Activated CD8-positive, alpha-beta T cell treated with anti-CD3 and anti-CD28 coated beads for 36 hours (primary cell): ENCODE measurements at regions of chr11 and their contacts with region 1.

Region 1: DNA sequence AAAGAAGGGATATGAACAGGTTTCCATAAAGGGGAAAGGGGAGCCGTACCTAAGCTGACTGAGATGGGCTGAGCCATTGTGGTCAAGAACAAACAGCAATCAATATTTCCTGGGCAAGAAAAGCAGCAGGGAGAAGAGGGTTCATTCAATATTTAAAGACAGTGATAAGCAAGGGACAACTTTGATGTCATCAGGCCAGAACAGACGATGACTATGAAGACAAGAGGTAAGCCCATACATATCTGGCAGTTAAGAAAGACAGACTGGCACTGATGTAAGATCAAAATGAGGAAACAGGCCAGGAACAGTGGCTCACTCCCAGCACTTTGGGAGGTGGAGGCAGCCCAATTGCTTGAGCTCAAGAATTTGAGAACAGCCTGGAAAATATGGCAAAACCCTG is 2.4 kb downstream of the OR5A2 start:
- DNase-seq: no peak
- ATAC-seq: no peak
- H3K4me3 Mint-ChIP-seq: no peak overlapping the region
- H3K27ac Mint-ChIP-seq: no peak overlapping the region
- H3K4me1 Mint-ChIP-seq: no peaks in the 10 kb centered on the region
- H3K27me3 Mint-ChIP-seq: no peaks in the 10 kb centered on the region
- CTCF ChIP-seq: no peak

Region 2: DNA sequence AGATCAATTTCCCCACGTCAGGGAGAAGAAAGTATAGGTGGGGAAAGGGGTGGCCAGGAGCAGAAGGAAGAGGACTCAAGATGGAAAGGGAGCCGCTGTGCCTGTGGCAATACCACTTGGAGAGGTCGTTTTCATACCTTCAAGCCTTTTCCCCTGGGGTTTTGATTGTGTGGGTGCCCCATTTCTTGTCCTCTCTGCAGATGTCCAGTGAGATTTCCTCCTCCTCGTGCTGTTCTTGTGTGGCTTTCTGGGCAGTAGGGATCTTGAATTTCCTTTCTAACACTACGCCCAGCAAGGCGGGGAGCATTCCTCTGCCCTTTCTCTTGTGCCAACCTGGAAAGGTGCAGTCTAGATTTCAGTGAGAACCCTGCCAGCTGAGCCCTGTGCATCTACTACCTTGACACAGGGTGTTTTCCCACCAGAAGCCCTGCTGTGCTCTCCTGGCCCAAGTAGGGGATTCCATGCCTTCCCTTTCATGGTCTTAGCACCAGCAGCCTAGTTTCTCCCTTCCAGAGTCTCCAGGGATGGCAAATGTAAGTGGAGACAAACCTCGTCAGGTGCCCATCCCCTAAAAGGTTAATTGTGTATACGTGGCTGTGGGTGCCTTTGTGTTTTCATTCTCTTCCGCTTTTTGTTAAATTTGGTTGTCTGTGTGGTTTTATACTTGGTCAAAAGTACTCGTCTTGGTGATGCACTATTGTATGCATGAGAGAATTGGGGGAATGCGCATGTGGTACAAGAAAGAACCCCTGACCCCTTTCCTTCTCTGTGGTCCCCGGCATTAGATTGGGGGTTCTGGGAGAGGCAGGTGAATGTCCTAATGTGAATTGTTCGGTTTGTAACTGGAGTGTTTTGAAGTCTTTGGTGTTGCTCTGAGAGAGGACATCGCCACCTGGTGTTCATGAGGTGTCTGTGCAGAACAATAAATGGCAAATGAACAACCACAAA is 139.7 kb before region 1 on chr11:
- CTCF ChIA-PET with region 1: no interaction called
- POLR2A ChIA-PET with region 1: no interaction called
- intact Hi-C with region 1: loop called (anchors 5 kb)
- DNase-seq: peak; percentile 66
- ATAC-seq: peak; percentile 87
- H3K4me3 Mint-ChIP-seq: peak overlapping the region; percentile 36
- H3K27ac Mint-ChIP-seq: no peak overlapping the region
- H3K4me1 Mint-ChIP-seq: peaks cover 10% of the 10 kb centered on the region
- H3K27me3 Mint-ChIP-seq: peaks cover 11% of the 10 kb centered on the region
- CTCF ChIP-seq: peak; percentile 73